Naive thymus-derived CD8-positive, alpha-beta T cell (primary cell): ENCODE measurements at regions of chr11 and their contacts with region 1.

Region 1: GRCh38 chr11:47248664-47249377 is at the start of gene ACP2:
- DNase-seq: peak; percentile 74 to 95 (median 84)
- ATAC-seq: peak; percentile 97
- H3K4me3 Mint-ChIP-seq: peak within 1 kb of the TSS; percentile 98 to 100 (median 99)
- H3K27ac Mint-ChIP-seq: peak within 1 kb of the TSS; percentile 93 to 100 (median 99)
- H3K4me1 Mint-ChIP-seq: peaks cover 5 to 28% (median 24%) of the 10 kb centered on the region in 4 donors
- H3K27me3 Mint-ChIP-seq: no peaks in the 10 kb centered on the region
- polyA plus RNA-seq, gene ACP2: 4.4 to 10.0 (median 8.0) TPM

Region 2: DNA sequence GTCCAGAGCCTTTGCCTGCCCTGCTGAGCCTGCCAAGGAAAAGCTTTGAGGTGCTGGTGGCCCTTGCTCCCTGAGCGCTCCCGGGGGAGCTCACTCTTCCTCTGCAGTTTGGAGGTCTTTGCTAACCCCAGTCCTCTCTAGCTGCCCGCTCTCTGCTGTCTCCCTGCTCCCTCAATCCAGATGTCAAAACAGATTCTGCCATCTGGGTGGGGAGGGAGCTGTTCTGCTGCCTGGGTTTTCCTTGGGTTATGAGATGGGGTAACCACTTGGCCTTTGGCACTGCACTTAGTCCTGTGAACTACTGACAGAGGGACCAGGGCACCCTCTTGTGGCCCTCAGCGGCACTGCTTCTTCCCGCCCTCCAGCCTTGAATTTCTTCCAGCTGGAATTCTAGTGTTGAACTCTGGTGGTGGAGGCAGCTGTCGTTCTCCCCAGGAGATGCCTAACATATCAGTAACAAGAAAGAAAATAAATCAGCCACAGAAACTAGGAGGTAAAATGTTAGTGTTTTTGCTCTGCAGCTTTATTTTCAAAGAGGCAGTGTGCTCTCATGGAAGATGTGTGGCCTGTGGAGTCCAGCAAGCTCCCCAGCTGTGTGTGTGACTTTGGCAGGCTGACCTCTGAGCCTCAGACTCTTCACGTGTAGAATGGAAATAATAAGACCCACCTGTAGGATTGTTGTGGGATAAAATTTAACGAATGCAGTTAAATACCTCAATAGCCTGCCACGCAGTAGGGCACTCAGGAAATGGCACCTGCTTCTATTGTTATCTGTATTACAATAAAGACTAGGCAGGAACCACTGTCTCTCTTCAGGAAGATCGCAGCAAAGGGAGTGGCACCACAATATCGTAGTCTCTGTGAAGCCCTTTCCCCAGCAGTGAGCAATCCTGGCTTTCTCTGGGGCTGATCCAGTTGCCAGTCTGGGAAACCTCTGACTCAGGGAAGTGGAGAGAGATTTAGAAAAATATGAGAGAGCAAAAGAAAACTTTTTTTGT is 95.6 kb before region 1 on chr11:
- POLR2A ChIA-PET with region 1: interaction called, 10 read pairs
- DNase-seq: peak in 9 of 10 donors; percentile 34 to 73 (median 58)
- ATAC-seq: peak; percentile 47 to 48
- H3K4me3 Mint-ChIP-seq: peak overlapping the region; percentile 66 to 92 (median 82)
- H3K27ac Mint-ChIP-seq: peak overlapping the region; percentile 93 to 99 (median 96)
- H3K4me1 Mint-ChIP-seq: peaks cover 30 to 55% (median 43%) of the 10 kb centered on the region in 4 donors
- H3K27me3 Mint-ChIP-seq: no peaks in the 10 kb centered on the region

Region 3: DNA sequence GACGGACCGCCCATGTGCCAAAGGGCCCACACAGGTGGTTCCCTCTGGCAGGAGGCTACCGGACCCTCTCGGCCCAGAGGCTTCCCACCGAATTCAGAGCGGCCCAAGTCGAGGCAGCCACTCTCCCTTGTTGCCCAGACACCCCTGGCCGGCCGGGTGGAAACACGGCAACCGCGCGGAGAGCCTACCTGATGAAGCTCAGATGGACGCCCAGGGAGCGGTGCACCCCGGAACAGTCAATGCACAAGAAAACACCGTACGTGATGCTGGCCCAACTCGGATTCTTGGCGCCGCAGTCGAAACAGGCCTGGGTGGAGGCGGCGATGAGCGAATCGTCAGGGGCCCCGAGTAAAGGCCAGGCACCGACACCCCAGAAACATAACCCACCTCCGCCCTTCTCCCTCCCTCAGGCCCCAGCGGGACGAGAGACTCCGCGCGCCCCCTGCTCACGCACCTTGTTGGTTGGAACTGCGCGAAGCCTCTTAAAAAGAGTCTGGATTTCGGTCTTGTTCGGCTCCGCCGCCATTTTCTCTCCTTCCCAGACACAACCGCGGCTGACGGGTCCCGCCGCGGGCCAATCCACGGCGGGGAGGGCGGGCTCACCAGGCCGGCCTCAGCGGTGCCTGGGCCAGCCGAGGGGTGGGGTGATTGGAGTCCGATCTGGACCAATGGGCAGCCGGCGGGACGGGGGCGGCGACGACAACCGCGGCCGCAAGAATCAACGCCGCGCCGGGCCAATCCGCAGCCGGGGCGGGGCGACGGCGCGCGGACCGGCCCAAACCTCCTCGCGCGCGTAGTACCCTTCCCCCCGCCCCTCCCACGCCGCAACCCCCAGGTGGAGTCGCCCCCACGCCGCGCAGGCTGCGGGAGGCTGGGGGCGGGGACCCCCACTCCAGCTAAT is 72.2 kb before region 1 on chr11 and contains the start of gene ARFGAP2:
- POLR2A ChIA-PET with region 1: interaction called, 17 read pairs
- DNase-seq: peak; percentile 92 to 97 (median 95)
- ATAC-seq: peak; percentile 92 to 93
- H3K4me3 Mint-ChIP-seq: peak within 1 kb of the TSS; percentile 91 to 99 (median 97)
- H3K27ac Mint-ChIP-seq: peak within 1 kb of the TSS; percentile 97 to 100 (median 100)
- H3K4me1 Mint-ChIP-seq: peaks cover 22 to 53% (median 52%) of the 10 kb centered on the region in 4 donors
- H3K27me3 Mint-ChIP-seq: peaks cover 0 to 4% (median 0%) of the 10 kb centered on the region in 5 donors
- polyA plus RNA-seq, gene ARFGAP2: 97.8 to 111 (median 108) TPM

Region 4: GRCh38 chr11:47213985-47214564 is 34.7 kb before region 1 on chr11:
- POLR2A ChIA-PET with region 1: interaction called, 64 read pairs
- DNase-seq: peak; percentile 68 to 88 (median 78)
- ATAC-seq: peak; percentile 77 to 79
- H3K4me3 Mint-ChIP-seq: peak overlapping the region; percentile 82 to 100 (median 99)
- H3K27ac Mint-ChIP-seq: peak overlapping the region; percentile 96 to 100 (median 99)
- H3K4me1 Mint-ChIP-seq: peaks cover 23 to 35% (median 32%) of the 10 kb centered on the region in 4 donors
- H3K27me3 Mint-ChIP-seq: no peaks in the 10 kb centered on the region

Region 5: DNA sequence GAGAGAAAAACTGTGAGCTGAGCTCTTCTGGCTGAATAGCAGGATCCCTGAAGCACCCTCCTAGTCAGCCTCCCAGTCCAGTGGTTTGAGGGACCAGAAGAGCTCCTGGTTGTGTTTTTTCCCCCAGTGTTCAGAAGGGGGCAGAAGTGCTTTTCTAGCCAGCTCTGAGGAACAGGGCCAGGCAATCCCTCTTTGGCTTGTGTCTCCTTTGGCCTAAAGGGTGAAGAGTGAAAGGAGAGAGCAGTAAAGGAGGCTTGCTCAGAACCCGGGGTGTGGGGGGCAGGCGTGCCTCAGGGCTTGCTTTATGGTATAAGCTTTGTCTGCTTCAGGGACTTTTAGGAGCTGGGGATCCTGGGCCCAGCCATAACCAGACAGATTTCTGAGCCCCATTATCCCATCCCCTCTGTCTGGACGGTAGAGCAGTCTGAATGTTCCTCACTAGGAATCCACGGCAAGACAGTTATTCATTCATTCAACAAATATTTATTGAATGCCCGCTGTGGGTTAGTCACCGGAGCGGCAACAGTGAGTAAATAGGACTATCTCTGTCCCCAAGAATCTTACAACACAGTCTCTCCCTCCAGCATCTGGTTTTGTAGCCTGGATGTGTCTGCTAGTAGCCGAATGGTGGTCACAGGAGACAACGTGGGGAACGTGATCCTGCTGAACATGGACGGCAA is 14.7 kb before region 1 on chr11:
- POLR2A ChIA-PET with region 1: interaction called, 62 read pairs
- DNase-seq: peak in 7 of 10 donors; percentile 19 to 69 (median 31)
- ATAC-seq: peak; percentile 10 to 31
- H3K4me3 Mint-ChIP-seq: peak overlapping the region; percentile 40 to 87 (median 80)
- H3K27ac Mint-ChIP-seq: peak overlapping the region; percentile 87 to 100 (median 96)
- H3K4me1 Mint-ChIP-seq: peaks cover 15 to 27% (median 22%) of the 10 kb centered on the region in 4 donors
- H3K27me3 Mint-ChIP-seq: no peaks in the 10 kb centered on the region

Region 6: DNA sequence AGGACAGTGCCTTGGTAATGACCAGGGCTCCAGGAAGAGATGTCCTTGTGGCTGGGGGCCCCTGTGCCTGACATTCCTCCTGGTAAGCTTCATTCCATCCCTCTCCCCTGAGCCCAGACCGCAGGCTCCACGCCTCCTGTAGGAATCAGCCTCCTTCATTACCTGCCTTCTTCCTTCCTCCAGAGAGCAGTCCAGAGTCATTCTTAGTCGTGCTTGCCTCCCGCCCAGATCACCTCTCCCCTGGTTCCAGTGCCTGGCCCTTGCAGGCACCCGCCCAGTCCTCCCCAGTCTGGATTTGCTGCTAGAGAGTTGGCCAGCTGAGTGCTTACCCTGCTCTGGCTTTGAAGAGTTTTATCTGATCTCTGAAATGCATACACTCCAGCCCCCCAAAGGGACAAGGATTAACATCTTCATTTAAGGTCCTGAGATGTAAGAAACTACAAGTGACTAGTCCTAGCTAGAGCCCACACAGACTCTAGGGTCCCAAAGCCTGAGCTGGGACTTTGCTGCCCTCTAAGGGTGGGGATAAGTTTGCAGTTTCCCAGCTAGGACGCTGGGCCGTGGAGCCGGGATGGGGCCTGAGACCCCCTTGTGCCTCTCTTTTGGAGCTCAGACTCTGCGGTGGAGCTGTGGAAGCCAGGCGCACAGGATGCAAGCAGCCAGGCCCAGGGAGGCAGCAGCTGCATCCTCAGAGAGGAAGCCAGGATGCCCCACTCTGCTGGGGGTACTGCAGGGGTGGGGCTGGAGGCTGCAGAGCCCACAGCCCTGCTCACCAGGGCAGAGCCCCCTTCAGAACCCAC is 10.6 kb after region 1 on chr11:
- POLR2A ChIA-PET with region 1: interaction called, 15 read pairs
- DNase-seq: peak in 7 of 10 donors; percentile 6 to 45 (median 34)
- ATAC-seq: peak; percentile 85 to 91
- H3K4me3 Mint-ChIP-seq: no peak overlapping the region
- H3K27ac Mint-ChIP-seq: peak overlapping the region in 6 of 10 donors; percentile 13 to 89 (median 59)
- H3K4me1 Mint-ChIP-seq: peaks cover 15 to 34% (median 20%) of the 10 kb centered on the region in 4 donors
- H3K27me3 Mint-ChIP-seq: no peaks in the 10 kb centered on the region

Region 7: GRCh38 chr11:47269002-47269828 is 20.4 kb after region 1 on chr11:
- POLR2A ChIA-PET with region 1: interaction called, 38 read pairs
- DNase-seq: peak; percentile 73 to 91 (median 82)
- ATAC-seq: peak; percentile 56 to 59
- H3K4me3 Mint-ChIP-seq: peak overlapping the region; percentile 75 to 98 (median 90)
- H3K27ac Mint-ChIP-seq: peak overlapping the region; percentile 90 to 99 (median 96)
- H3K4me1 Mint-ChIP-seq: peaks cover 30 to 75% (median 60%) of the 10 kb centered on the region in 4 donors
- H3K27me3 Mint-ChIP-seq: no peaks in the 10 kb centered on the region